ENCODE measurements at regions of chr9 and their contacts with region 1.

Region 1: DNA sequence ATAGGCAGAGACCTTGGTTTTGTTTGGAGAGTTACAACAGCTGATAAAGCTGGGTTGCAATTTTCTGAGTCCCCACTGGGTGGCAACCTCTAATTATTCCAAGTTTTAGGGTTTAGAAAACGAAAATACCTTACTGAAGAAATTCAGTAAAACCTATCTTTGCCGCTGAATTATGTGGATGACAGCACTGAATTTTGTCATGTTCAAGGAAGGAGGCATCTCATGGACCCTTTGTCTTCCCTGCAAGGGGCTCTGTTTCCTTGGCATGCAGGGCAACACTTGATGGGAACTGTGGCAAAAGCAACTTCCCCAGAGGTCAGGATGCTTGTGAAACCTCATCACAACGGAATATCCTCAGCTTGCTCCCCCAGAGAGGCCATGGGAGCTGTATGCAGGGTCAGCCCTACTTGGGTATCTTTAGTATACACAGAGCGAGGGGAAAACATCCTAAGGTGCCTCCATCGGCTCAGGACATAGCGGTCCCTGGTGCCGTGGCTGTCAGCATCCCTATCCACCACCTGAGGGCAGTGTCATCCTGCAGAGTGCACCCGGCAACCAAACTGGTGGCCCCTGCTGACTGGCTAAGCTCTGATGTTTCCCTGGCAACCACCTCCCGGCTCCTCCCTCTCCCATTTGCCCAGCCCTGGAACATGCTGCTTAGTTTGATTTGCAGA is 123.1 kb downstream of the RXRA start:
- DNase-seq: peak; percentile 71 to 85 (median 80)
- ATAC-seq: peak; percentile 99
- H3K4me3 ChIP-seq: no peak overlapping the region
- H3K27ac ChIP-seq: no peak overlapping the region
- H3K4me1 ChIP-seq: peaks cover 0 to 2% of the 10 kb centered on the region in 2 experiments; a peak in 2 of 5 replicates
- H3K27me3 ChIP-seq: 0 out of 5 replicates have a peak, but pooled peaks cover 0 to 5% of the 10 kb centered on the region in 2 experiments
- CTCF ChIP-seq: peak; percentile 74 to 80 (median 78)
- EP300 ChIP-seq: no peak
- POLR2A ChIP-seq: no peak
- RAD21 ChIP-seq: peak; percentile 44 to 80; a peak in 3 of 4 replicates

Region 2: GRCh38 chr9:133060417-133060841 is 1388.9 kb before region 1 on chr9:
- CTCF ChIA-PET with region 1: no interaction called
- POLR2A ChIA-PET with region 1: no interaction called
- in situ Hi-C with region 1: no loop called
- intact Hi-C with region 1: no loop called
- DNase-seq: peak in 3 of 4 experiments; percentile 34 to 59 (median 56)
- ATAC-seq: peak; percentile 67
- H3K4me3 ChIP-seq: no peak overlapping the region
- H3K27ac ChIP-seq: 0 out of 3 replicates have a peak overlapping the region, but pooled peaks have one; percentile 22
- H3K4me1 ChIP-seq: peaks cover 20 to 55% of the 10 kb centered on the region in 2 experiments
- H3K27me3 ChIP-seq: no peaks in the 10 kb centered on the region
- CTCF ChIP-seq: 0 out of 6 replicates have a peak, but pooled peaks of 1 of the 3 experiments have one; percentile 9
- EP300 ChIP-seq: peak; percentile 36; the same call in 1 of the 2 replicates
- POLR2A ChIP-seq: no peak
- RAD21 ChIP-seq: no peak

Region 3: GRCh38 chr9:134163353-134164196 is 285.8 kb before region 1 on chr9:
- CTCF ChIA-PET with region 1: interaction called, 52 read pairs
- POLR2A ChIA-PET with region 1: no interaction called
- in situ Hi-C with region 1: loop called (anchors 5 kb)
- intact Hi-C with region 1: no loop called
- DNase-seq: no peak
- ATAC-seq: no peak
- H3K4me3 ChIP-seq: no peak overlapping the region
- H3K27ac ChIP-seq: no peak overlapping the region
- H3K4me1 ChIP-seq: peaks cover 3 to 24% of the 10 kb centered on the region in 2 experiments; a peak in 2 of 5 replicates
- H3K27me3 ChIP-seq: no peaks in the 10 kb centered on the region
- CTCF ChIP-seq: no peak
- EP300 ChIP-seq: no peak
- POLR2A ChIP-seq: no peak
- RAD21 ChIP-seq: no peak

Region 4: DNA sequence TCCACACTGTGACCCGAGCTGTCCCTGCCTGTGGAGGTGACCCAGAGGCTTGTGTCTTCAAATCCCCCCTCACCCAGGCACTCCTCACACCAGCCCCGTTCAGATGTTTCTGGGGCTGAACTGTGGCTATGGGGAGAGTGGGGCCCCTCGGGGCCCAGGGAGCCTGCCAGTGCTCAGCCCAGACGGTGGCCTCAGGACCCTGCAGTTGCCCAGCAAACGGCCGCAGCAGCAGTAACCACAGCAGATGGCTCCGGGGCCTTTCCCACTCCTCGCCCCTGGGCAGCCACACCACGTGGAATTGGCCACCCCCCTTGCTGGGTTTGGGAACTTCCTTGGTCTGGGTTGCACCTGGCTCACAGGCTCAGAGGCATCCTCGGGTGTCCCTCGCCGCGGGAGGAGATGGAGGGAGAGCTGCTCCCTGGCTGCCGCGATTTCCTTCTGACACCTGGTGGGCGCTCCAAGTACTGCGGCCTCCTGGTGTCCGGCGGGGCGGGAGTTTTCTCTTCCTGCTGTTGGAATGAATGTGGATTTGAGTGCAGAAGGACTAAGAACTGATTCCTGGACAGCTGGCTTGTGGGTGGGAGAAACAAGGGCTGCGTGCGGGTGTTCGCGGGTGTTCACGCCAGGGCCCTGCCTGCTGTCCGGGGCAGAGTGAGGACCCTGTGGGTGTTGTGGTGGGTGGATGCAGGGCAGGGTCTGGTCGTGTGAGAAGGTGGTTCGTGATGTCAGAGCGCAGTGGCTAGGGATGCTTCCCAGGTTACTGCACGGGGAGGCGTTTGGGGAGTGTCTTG is 289.7 kb after region 1 on chr9:
- CTCF ChIA-PET with region 1: interaction called, 11 read pairs
- POLR2A ChIA-PET with region 1: no interaction called
- in situ Hi-C with region 1: no loop called
- intact Hi-C with region 1: loop called (anchors 2 kb)
- DNase-seq: peak; percentile 53 to 76 (median 68)
- ATAC-seq: peak; percentile 86
- H3K4me3 ChIP-seq: no peak overlapping the region
- H3K27ac ChIP-seq: no peak overlapping the region
- H3K4me1 ChIP-seq: no peaks in the 10 kb centered on the region
- H3K27me3 ChIP-seq: peaks cover 0 to 22% of the 10 kb centered on the region in 2 experiments; a peak in 2 of 5 replicates
- CTCF ChIP-seq: peak; percentile 72 to 73 (median 73)
- EP300 ChIP-seq: no peak
- POLR2A ChIP-seq: no peak
- RAD21 ChIP-seq: peak; percentile 26 to 70